ENCODE measurements at regions of chr22 and their contacts with region 1.

Region 1: DNA sequence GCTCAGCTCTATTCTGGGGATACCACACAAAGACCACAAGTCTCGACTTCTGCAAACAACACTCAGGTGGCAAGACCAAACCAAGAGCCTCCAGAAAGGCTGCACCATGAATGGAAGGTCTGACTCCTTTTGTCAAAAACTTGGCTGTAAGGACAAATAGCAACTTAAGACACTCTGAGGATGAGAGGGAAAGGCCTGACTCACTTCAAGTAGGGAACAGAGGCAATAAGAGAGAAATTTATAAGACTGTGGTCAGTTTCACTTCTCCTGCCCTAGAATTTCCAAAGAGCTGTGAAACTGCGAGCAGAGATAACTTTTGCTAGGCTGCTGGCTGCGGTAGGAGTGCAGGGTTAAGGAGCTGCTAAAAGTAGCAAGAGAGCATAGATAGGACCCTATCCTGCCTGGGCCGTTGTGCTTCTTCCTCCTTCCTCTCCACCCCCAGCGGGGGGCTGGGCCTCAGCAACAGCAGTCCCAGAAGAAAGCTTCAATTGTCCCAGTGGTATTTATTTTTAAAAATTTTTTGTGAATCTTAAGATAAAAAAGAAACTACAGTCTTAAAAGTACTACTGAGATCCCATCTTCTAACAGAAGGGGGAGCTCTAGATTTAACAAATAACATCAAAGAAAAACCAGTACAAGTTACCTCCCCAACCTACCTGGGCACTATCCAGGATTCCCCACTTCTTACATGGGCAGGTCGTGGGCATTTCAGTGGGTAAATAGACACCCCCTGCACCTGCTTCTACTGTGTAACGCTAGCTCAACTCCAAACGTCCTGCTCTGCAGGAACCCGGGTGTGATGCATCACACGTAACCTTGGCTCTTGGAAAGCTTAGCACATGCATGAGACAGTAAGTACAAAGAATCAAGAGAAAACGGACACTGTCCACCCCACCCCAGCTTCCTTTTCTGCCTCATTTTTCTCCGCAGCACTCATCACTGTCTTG is 66.4 kb downstream of the SGSM3 start:
- DNase-seq: peak; percentile 44
- H3K4me3 ChIP-seq: no peak overlapping the region
- H3K27ac ChIP-seq: peak overlapping the region; percentile 34
- H3K4me1 ChIP-seq: peaks cover 10% of the 10 kb centered on the region
- H3K27me3 ChIP-seq: no peaks in the 10 kb centered on the region
- CTCF ChIP-seq: peak; percentile 52 to 56

Region 2: DNA sequence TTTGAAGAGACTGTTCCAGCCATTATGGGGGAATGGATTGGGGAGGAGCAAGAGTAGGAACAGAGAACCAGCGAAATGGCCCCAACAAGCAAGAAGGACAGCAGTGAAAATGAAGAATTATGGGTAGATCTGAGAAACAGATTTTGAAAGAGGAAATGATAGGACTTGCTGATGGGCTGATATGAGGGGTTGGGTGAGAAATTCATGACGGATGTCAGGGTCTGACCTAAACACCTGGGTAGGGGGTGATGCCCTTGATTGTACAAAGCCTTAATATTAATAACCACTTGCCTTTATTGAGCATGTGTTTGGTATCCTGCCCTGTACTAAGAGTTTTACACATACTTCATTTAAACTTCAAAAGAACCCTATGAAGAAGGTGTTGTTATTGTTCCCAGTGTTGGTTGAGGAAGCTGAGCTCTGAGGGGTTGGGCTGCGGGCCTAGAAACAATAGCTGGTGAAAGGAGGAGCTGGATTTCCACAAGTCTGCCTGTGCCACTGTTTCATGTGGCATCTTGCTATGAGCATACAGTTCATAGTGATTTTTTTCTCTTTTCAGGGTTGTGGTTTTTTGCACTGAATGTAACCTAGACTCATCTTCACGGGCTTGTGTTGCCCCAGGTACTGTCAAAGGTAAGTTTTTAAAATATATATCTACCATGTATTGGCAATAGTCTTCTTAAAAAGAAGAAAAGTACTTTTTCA is 320.1 kb before region 1 on chr22:
- CTCF ChIA-PET with region 1: no interaction called
- dilution Hi-C with region 1: no loop called
- in situ Hi-C with region 1: no loop called
- intact Hi-C with region 1: no loop called
- DNase-seq: no peak
- H3K4me3 ChIP-seq: no peak overlapping the region
- H3K27ac ChIP-seq: no peak overlapping the region
- H3K4me1 ChIP-seq: no peaks in the 10 kb centered on the region
- H3K27me3 ChIP-seq: no peaks in the 10 kb centered on the region
- CTCF ChIP-seq: no peak

Region 3: DNA sequence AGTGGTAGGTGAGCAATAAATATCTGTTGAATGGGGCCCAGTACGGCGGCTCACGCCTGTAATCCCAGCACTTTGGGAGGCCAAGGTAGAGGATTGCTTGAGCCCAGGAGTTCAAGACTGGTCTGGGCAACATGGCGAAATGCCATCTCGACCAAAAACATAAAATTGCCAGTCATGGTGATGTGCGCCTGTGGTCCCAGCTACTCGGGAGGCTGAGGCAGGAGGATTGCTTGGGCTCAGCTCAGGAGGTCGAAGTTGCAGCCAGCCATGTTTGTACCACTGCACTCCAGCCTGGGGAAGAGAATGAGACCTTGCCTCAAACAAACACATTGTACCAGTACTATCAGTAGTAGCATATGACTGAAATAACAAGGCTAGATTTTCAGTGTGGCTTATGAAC is 62.2 kb before region 1 on chr22:
- CTCF ChIA-PET with region 1: no interaction called
- dilution Hi-C with region 1: loop called (anchors 5 kb)
- in situ Hi-C with region 1: no loop called
- intact Hi-C with region 1: no loop called
- DNase-seq: no peak
- H3K4me3 ChIP-seq: no peak overlapping the region
- H3K27ac ChIP-seq: no peak overlapping the region
- H3K4me1 ChIP-seq: peaks cover 9% of the 10 kb centered on the region
- H3K27me3 ChIP-seq: no peaks in the 10 kb centered on the region
- CTCF ChIP-seq: no peak

Region 4: GRCh38 chr22:40487663-40488249 is 51.0 kb after region 1 on chr22:
- CTCF ChIA-PET with region 1: interaction called, 6 read pairs
- dilution Hi-C with region 1: loop called (anchors 5 kb)
- in situ Hi-C with region 1: no loop called
- intact Hi-C with region 1: loop called (anchors 1 kb)
- DNase-seq: no peak
- H3K4me3 ChIP-seq: no peak overlapping the region
- H3K27ac ChIP-seq: peak overlapping the region; percentile 83
- H3K4me1 ChIP-seq: peaks cover 43% of the 10 kb centered on the region
- H3K27me3 ChIP-seq: no peaks in the 10 kb centered on the region
- CTCF ChIP-seq: peak; percentile 81 to 86

Region 5: DNA sequence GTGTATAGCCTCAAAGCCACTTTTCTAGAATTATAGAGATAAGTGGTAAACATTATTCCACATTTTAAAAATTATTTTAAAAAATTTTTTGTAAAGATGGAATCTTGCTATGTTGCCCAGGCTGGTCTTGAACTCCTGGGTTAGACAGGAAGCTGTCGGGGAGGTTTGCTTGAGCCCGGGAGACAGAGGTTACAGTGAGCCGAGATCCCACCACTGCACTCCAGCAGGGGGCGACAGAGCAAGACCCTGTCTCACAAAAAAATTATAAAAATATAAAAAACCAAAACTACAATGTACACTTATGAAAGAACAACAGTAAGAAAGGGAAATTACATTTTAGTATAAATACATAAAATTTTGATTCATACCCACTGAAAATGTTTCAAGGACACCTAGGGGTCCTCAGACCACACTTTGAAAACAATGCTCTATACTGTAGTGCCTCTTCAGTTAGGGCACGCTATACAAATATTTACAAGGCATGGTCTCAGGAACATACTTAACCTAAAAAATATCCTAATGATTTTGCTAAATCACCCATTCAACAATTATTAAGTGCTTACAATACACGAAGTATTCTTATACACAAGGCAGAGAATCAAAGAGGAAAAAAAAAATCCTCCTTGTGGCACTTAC is 88.6 kb after region 1 on chr22:
- CTCF ChIA-PET with region 1: no interaction called
- dilution Hi-C with region 1: no loop called
- in situ Hi-C with region 1: no loop called
- intact Hi-C with region 1: loop called (anchors 2 kb)
- DNase-seq: peak; percentile 20
- H3K4me3 ChIP-seq: no peak overlapping the region
- H3K27ac ChIP-seq: no peak overlapping the region
- H3K4me1 ChIP-seq: peaks cover 5% of the 10 kb centered on the region
- H3K27me3 ChIP-seq: no peaks in the 10 kb centered on the region
- CTCF ChIP-seq: peak; percentile 63 to 70

Region 6: DNA sequence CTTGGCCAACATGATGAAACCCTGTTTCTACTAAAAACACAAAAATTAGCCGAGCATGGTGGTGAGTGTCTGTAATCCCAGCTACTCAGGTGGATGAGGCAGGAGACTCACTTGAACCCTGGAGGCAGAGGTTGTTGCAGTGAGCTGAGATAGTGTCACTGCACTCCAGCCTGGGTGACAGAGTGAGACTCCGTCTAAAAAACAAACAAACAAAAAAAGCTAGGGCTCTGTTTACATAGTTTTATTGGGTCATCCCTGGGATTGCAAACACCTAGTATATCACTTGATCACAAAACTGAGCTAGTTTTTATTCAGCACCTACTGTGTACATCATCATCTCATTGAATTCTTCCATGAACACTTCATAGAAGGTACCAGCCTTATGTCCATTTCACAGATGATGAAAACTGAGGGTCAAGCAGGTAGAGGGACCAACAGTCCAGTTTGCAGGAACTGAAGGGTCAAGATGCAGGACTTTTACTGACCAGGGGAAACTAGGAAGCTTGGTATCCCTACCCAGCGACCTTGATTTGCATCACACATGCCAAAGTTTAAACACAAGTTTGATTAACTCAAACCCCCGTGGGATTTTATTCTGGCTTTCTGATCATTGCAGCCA is 208.9 kb after region 1 on chr22:
- CTCF ChIA-PET with region 1: interaction called, 5 read pairs
- dilution Hi-C with region 1: loop called (anchors 5 kb)
- in situ Hi-C with region 1: loop called (anchors 5 to 10 kb)
- intact Hi-C with region 1: loop called (anchors 1 kb)
- DNase-seq: no peak
- H3K4me3 ChIP-seq: no peak overlapping the region
- H3K27ac ChIP-seq: no peak overlapping the region
- H3K4me1 ChIP-seq: peaks cover 18% of the 10 kb centered on the region
- H3K27me3 ChIP-seq: no peaks in the 10 kb centered on the region
- CTCF ChIP-seq: no peak

Region 7: GRCh38 chr22:40898850-40899357 is 462.1 kb after region 1 on chr22:
- CTCF ChIA-PET with region 1: no interaction called
- dilution Hi-C with region 1: no loop called
- in situ Hi-C with region 1: no loop called
- intact Hi-C with region 1: loop called (anchors 2 kb)
- DNase-seq: peak; percentile 52
- H3K4me3 ChIP-seq: no peak overlapping the region
- H3K27ac ChIP-seq: no peak overlapping the region
- H3K4me1 ChIP-seq: peaks cover 2% of the 10 kb centered on the region
- H3K27me3 ChIP-seq: no peaks in the 10 kb centered on the region
- CTCF ChIP-seq: peak; percentile 56 to 59

Measured in mammary epithelial cell (primary cell).